Upper lobe of right lung (tissue), 1 donor: ENCODE measurements at regions of chr10 and their contacts with region 1.

Region 1: GRCh38 chr10:4849555-4850242 is 23.7 kb downstream of the AKR1E2 start:
- DNase-seq: peak; percentile 95
- ATAC-seq: peak; percentile 97
- H3K4me3 ChIP-seq: no peak overlapping the region
- H3K27ac ChIP-seq: no peak overlapping the region
- H3K4me1 ChIP-seq: peaks cover 13% of the 10 kb centered on the region
- H3K27me3 ChIP-seq: no peaks in the 10 kb centered on the region
- CTCF ChIP-seq: peak; percentile 95

Region 2: GRCh38 chr10:4733151-4733842 is 116.4 kb before region 1 on chr10:
- intact Hi-C with region 1: no loop called
- DNase-seq: no peak
- ATAC-seq: no peak
- H3K4me3 ChIP-seq: no peak overlapping the region
- H3K27ac ChIP-seq: no peak overlapping the region
- H3K4me1 ChIP-seq: no peaks in the 10 kb centered on the region
- H3K27me3 ChIP-seq: no peaks in the 10 kb centered on the region
- CTCF ChIP-seq: no peak

Region 3: DNA sequence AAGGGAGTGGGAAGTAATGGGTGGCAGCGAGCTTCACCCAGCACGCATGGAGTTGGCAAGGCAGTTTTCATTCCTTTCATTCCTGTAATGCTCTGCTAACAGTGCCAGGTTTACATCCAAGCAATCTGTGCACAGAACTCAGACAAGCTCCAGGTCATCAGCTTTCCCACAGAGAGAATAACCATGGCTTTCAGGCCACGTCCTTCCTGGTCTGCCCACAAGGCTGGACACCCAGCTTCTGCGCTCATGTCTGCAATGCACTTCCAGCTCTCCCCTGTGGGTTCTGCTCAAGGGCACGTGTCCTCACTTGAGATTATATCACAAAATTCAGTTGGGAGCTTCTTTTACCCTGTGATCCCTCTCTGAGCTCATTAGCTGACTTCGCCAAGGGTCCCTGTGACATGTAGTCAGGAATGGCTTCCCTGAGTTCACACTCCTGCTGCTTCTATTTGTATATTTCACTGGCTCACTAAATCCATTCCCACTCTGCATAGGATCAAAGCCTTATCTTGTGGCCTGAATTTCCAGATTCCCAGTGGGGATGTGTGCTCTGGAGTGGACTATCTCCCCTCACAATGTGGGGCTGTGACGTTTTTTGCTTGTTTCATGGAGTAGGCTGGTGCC is 135.4 kb after region 1 on chr10:
- intact Hi-C with region 1: no loop called
- DNase-seq: no peak
- ATAC-seq: peak; percentile 49
- H3K4me3 ChIP-seq: no peak overlapping the region
- H3K27ac ChIP-seq: peak overlapping the region; percentile 30
- H3K4me1 ChIP-seq: peaks cover 10% of the 10 kb centered on the region
- H3K27me3 ChIP-seq: no peaks in the 10 kb centered on the region
- CTCF ChIP-seq: no peak

Region 4: GRCh38 chr10:5094265-5095205 is 244.8 kb after region 1 on chr10 and contains the start of gene AKR1C3:
- intact Hi-C with region 1: loop called (anchors 10 kb)
- DNase-seq: no peak
- ATAC-seq: peak; percentile 86
- H3K4me3 ChIP-seq: peak within 1 kb of the TSS; percentile 52
- H3K27ac ChIP-seq: peak within 1 kb of the TSS; percentile 39
- H3K4me1 ChIP-seq: no peaks in the 10 kb centered on the region
- H3K27me3 ChIP-seq: no peaks in the 10 kb centered on the region
- CTCF ChIP-seq: peak; percentile 72
- total RNA-seq, gene AKR1C3: 63.6 TPM

Region 5: GRCh38 chr10:5283305-5284158 is 433.8 kb after region 1 on chr10:
- intact Hi-C with region 1: loop called (anchors 10 kb)
- DNase-seq: peak; percentile 71
- ATAC-seq: peak; percentile 94
- H3K4me3 ChIP-seq: no peak overlapping the region
- H3K27ac ChIP-seq: no peak overlapping the region
- H3K4me1 ChIP-seq: no peaks in the 10 kb centered on the region
- H3K27me3 ChIP-seq: no peaks in the 10 kb centered on the region
- CTCF ChIP-seq: peak; percentile 69